ENCODE measurements at regions of chr12 and their contacts with region 1.

Region 1: GRCh38 chr12:6465467-6466183 is 4.9 kb downstream of the VAMP1 start:
- DNase-seq: peak; percentile 53 to 88
- H3K4me3 ChIP-seq: no peak overlapping the region
- H3K27ac ChIP-seq: peak overlapping the region in 2 of 5 donors; percentile 12 to 25
- H3K4me1 ChIP-seq: peaks cover 27 to 86% (median 35%) of the 10 kb centered on the region in 4 donors
- H3K27me3 ChIP-seq: no peaks in the 10 kb centered on the region
- CTCF ChIP-seq: peak in 6 of 7 experiments; percentile 50 to 94 (median 80)
- EP300 ChIP-seq: no peak
- POLR2A ChIP-seq: no peak

Region 2: GRCh38 chr12:6323340-6323994 is 142.2 kb before region 1 on chr12:
- intact Hi-C with region 1: loop called (anchors 10 kb)
- DNase-seq: peak; percentile 42 to 85
- H3K4me3 ChIP-seq: peak overlapping the region in 3 of 4 donors; percentile 6 to 17 (median 15)
- H3K27ac ChIP-seq: peak overlapping the region; percentile 62 to 99 (median 95)
- H3K4me1 ChIP-seq: peaks cover 55 to 68% (median 65%) of the 10 kb centered on the region in 4 donors
- H3K27me3 ChIP-seq: no peaks in the 10 kb centered on the region
- CTCF ChIP-seq: peak in 5 of 7 experiments; percentile 18 to 69 (median 52)
- EP300 ChIP-seq: no peak
- POLR2A ChIP-seq: no peak

Region 3: GRCh38 chr12:6423267-6424007 is 42.2 kb before region 1 on chr12:
- intact Hi-C with region 1: loop called (anchors 5 kb)
- DNase-seq: peak; percentile 87 to 96
- H3K4me3 ChIP-seq: no peak overlapping the region
- H3K27ac ChIP-seq: peak overlapping the region in 3 of 5 donors; percentile 17 to 58 (median 37)
- H3K4me1 ChIP-seq: peaks cover 8 to 29% (median 15%) of the 10 kb centered on the region in 4 donors
- H3K27me3 ChIP-seq: no peaks in the 10 kb centered on the region
- CTCF ChIP-seq: peak in 5 of 7 experiments; percentile 65 to 95 (median 86)
- EP300 ChIP-seq: no peak
- POLR2A ChIP-seq: no peak

Region 4: GRCh38 chr12:7269273-7269672 is 803.6 kb after region 1 on chr12:
- intact Hi-C with region 1: no loop called
- DNase-seq: no peak
- H3K4me3 ChIP-seq: no peak overlapping the region
- H3K27ac ChIP-seq: no peak overlapping the region
- H3K4me1 ChIP-seq: no peaks in the 10 kb centered on the region
- H3K27me3 ChIP-seq: no peaks in the 10 kb centered on the region
- CTCF ChIP-seq: no peak
- EP300 ChIP-seq: no peak
- POLR2A ChIP-seq: no peak